WTC11 (cell line): ENCODE measurements at regions of chr5 and their contacts with region 1.

Region 1: GRCh38 chr5:140357726-140358093 is 2.3 kb upstream of the SLC4A9 start:
- DNase-seq: peak; percentile 87
- ATAC-seq: peak; percentile 93
- H3K4me3 Mint-ChIP-seq: peak overlapping the region; percentile 61
- H3K27ac Mint-ChIP-seq: peak overlapping the region; percentile 95
- H3K4me1 Mint-ChIP-seq: peaks cover 10% of the 10 kb centered on the region
- H3K27me3 Mint-ChIP-seq: peaks cover 8% of the 10 kb centered on the region; the same call in 1 of the 2 replicates
- CTCF ChIP-seq: peak; percentile 69

Region 2: GRCh38 chr5:140227048-140227447 is 130.7 kb before region 1 on chr5:
- CTCF ChIA-PET with region 1: interaction called, 10 read pairs
- POLR2A ChIA-PET with region 1: no interaction called
- DNase-seq: no peak
- ATAC-seq: peak; percentile 73
- H3K4me3 Mint-ChIP-seq: no peak overlapping the region
- H3K27ac Mint-ChIP-seq: no peak overlapping the region
- H3K4me1 Mint-ChIP-seq: no peaks in the 10 kb centered on the region
- H3K27me3 Mint-ChIP-seq: no peaks in the 10 kb centered on the region
- CTCF ChIP-seq: no peak

Region 3: DNA sequence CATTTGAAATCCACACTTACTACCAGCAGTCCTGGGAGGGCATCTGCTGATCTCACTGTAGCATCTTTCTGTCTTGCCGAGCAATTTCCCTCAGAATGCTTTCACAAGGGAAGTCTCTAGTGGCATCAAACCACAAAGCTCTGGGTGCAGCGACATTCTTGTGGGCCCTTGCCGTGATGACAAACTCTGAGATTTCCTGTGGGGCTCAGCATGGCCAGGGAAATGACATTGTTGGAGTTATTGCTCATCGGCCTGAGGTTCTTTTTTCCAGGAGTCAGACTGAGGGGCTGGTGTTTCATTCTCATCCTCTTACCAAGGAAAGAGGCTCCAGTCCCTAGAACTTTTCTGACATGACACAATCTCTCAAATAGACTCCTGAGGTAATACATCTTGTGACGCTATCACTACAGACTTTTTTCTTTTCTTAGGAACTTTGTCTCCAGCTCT is 106.2 kb before region 1 on chr5:
- CTCF ChIA-PET with region 1: interaction called, 621 read pairs
- POLR2A ChIA-PET with region 1: no interaction called
- DNase-seq: no peak
- ATAC-seq: no peak
- H3K4me3 Mint-ChIP-seq: no peak overlapping the region
- H3K27ac Mint-ChIP-seq: no peak overlapping the region
- H3K4me1 Mint-ChIP-seq: peaks cover 13% of the 10 kb centered on the region
- H3K27me3 Mint-ChIP-seq: no peaks in the 10 kb centered on the region
- CTCF ChIP-seq: no peak

Region 4: DNA sequence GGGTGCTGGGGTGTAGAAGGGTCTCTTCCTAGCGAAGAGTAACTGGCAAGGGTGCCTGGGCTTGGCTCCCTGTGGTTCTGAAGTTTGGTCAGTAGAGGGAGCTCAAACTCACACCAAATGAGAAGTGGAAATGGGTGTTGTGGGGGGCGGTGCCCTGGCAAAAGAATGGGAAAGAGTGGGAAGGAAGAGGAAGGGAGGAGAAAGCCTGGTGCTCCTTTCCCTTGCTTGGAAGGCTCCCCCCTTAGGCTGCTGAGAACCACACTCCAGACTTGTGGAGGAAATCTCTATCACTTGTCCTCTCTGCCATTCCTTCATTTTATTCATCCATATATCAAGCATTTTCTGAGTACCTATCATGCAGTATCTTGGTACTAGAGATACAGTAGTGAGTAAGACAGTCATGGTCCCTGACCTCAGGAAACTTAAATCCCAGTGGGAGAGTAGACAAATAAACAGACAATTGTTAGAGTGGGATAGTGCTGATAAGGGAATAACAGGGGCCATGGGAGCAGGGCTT is 15.3 kb after region 1 on chr5:
- CTCF ChIA-PET with region 1: interaction called, 53 read pairs
- POLR2A ChIA-PET with region 1: no interaction called
- DNase-seq: peak; percentile 88
- ATAC-seq: peak; percentile 97
- H3K4me3 Mint-ChIP-seq: no peak overlapping the region
- H3K27ac Mint-ChIP-seq: peak overlapping the region; percentile 62
- H3K4me1 Mint-ChIP-seq: peaks cover 4% of the 10 kb centered on the region
- H3K27me3 Mint-ChIP-seq: no peaks in the 10 kb centered on the region; the same call in 1 of the 2 replicates
- CTCF ChIP-seq: peak; percentile 66

Region 5: GRCh38 chr5:140488914-140489313 is 131.2 kb after region 1 on chr5:
- CTCF ChIA-PET with region 1: no interaction called
- POLR2A ChIA-PET with region 1: no interaction called
- DNase-seq: no peak
- ATAC-seq: no peak
- H3K4me3 Mint-ChIP-seq: no peak overlapping the region
- H3K27ac Mint-ChIP-seq: no peak overlapping the region
- H3K4me1 Mint-ChIP-seq: no peaks in the 10 kb centered on the region
- H3K27me3 Mint-ChIP-seq: no peaks in the 10 kb centered on the region
- CTCF ChIP-seq: no peak

Region 6: DNA sequence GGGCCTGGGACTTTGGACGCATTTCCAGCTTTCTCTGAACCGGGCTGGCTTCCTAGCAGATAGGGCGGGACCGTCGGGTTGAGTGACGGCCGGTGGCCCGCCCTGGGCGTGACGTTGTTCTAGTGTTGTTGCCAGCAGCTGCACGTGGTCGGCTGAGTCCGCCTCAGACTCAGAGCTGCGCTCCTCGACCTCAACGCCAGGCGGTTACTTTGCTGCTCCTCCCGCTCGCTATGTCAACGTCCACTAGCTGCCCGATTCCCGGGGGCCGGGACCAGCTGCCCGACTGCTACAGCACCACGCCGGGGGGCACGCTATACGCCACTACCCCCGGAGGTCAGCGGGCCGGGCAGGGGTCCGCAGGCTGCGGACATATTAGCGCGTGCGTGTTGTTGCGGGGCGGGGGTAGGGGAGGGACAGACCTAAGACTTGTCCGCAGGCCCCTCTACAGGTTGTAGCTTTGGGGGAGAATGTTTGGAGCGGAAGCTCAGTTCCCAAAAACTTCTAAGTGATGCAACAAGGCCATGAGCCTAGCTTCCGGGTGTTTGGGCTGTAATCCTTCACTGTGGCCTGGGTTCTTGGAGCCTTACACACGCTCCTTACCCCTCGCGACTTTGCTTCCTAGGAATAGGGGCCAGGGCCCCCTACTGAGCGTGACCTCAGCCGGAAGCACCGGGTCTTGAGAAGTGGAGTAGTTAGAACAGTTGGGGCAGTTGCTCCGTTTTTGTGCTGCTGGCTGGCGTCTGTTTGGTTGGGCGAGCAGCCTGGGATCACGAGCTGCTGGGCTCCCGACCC is 190.0 kb after region 1 on chr5 and contains the start of gene EIF4EBP3:
- CTCF ChIA-PET with region 1: interaction called, 20 read pairs
- POLR2A ChIA-PET with region 1: no interaction called
- DNase-seq: peak; percentile 98
- ATAC-seq: peak; percentile 95
- H3K4me3 Mint-ChIP-seq: peak within 1 kb of the TSS; percentile 77
- H3K27ac Mint-ChIP-seq: peak within 1 kb of the TSS; percentile 97
- H3K4me1 Mint-ChIP-seq: peaks cover 25% of the 10 kb centered on the region
- H3K27me3 Mint-ChIP-seq: no peaks in the 10 kb centered on the region
- CTCF ChIP-seq: no peak
- total RNA-seq, gene EIF4EBP3: 8.4 to 9.8 TPM (median 8.8 TPM) in 3 replicates

Region 7: DNA sequence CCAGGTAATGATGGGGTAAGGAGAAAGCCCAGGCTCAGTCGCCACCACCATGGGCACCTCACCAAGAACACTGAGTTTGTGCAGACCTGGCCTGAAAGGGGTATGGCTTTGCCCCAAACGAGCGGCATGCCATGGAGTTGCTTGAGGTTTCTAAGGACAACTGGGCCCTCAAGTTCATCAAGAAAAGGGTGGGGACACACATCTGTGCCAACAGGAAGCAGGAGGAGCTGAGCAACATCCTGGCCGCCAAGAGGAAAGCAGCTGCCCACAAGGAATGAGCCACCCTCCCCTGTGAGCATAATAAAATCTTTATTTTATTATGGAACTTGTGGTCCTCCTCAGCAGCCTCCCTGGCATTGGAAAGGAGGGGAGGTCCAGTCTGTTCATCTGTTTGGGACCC is 251.4 kb after region 1 on chr5:
- CTCF ChIA-PET with region 1: no interaction called
- POLR2A ChIA-PET with region 1: no interaction called
- DNase-seq: no peak
- ATAC-seq: no peak
- H3K4me3 Mint-ChIP-seq: no peak overlapping the region
- H3K27ac Mint-ChIP-seq: no peak overlapping the region
- H3K4me1 Mint-ChIP-seq: no peaks in the 10 kb centered on the region
- H3K27me3 Mint-ChIP-seq: peaks cover 29% of the 10 kb centered on the region
- CTCF ChIP-seq: no peak

Region 8: GRCh38 chr5:140664359-140665119 is 306.8 kb after region 1 on chr5 and contains the start of gene WDR55:
- CTCF ChIA-PET with region 1: no interaction called
- POLR2A ChIA-PET with region 1: no interaction called
- DNase-seq: peak; percentile 95
- ATAC-seq: peak; percentile 98
- H3K4me3 Mint-ChIP-seq: peak within 1 kb of the TSS; percentile 99
- H3K27ac Mint-ChIP-seq: peak within 1 kb of the TSS; percentile 98
- H3K4me1 Mint-ChIP-seq: peaks cover 6% of the 10 kb centered on the region
- H3K27me3 Mint-ChIP-seq: no peaks in the 10 kb centered on the region
- CTCF ChIP-seq: no peak
- total RNA-seq, gene WDR55: 22.1 to 25.3 TPM (median 23.5 TPM) in 3 replicates